Tibial artery (tissue), 4 donors: ENCODE measurements at regions of chr9 and their contacts with region 1.

Region 1: DNA sequence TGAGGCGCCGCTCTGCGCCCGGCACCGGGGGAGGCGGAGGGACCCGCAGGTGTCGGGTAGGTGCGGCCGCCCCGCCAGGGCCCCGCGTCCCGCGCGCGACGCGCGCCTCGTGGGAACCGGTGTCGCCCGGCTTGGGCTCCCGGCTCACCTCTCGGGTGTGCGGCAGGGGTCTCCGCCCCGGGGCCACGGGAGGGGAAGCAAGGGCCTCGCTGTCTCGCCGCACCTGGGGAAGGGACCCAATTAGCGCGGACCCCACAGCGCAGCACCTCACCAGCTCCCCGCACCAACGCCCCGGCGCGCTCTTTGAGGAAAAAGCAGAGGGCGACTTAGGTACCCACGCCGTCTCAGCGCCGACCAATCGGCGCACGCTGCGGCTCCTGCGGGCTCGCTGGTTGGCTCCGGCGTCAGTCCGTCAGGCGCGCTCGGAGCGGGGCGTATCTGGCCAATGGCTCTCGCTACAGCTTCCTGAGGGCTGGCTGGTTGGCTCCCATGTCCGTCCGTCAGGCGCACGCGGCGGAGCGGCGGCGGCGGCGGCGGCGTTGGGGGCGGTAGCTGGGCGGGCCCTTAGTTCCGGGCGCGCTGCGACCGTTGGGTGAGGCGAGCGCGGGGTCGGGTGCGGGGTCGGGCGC is at the start of gene TRAF2:
- DNase-seq: peak; percentile 95 to 98
- H3K4me3 ChIP-seq: peak within 1 kb of the TSS; percentile 70 to 90
- H3K27ac ChIP-seq: peak within 1 kb of the TSS; percentile 80 to 92
- H3K4me1 ChIP-seq: peaks cover 0 to 32% (median 20%) of the 10 kb centered on the region in 4 donors
- H3K27me3 ChIP-seq: no peaks in the 10 kb centered on the region
- CTCF ChIP-seq: peak in 1 of 2 experiments; percentile 39

Region 2: GRCh38 chr9:137423004-137423874 is 537.2 kb after region 1 on chr9 and contains the starts of genes EXD3 and NOXA1:
- intact Hi-C with region 1: loop called (anchors 5 kb)
- DNase-seq: peak; percentile 85 to 94
- H3K4me3 ChIP-seq: peak within 1 kb of the TSS; percentile 72 to 83
- H3K27ac ChIP-seq: peak within 1 kb of the TSS; percentile 66
- H3K4me1 ChIP-seq: peaks cover 0 to 23% (median 16%) of the 10 kb centered on the region in 4 donors
- H3K27me3 ChIP-seq: no peaks in the 10 kb centered on the region
- CTCF ChIP-seq: peak; percentile 56 to 81